Endothelial cell of umbilical vein (primary cell): ENCODE measurements at regions of chr2 and their contacts with region 1.

Region 1: DNA sequence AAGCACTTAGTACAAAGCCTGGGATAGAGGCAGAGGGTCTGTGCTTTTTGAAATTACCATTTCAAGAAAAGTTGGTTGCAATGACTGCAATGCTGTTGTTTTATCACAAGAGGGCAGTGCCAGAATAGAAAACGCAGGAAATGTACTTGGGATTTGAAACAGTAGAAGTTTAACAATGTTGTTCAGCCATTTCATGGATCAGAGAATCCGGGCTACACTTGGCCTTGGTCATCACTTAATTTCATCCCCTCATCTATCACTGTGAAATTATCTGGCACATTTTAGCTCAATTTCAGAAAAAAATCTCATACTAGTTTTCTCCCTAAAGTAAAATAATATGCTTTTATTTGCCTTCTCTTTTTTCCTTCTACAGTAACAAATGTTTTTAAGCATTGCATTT is 70.8 kb downstream of the RAPGEF4 start:
- DNase-seq: peak; percentile 54
- H3K4me3 ChIP-seq: no peak overlapping the region
- H3K27ac ChIP-seq: no peak overlapping the region
- H3K4me1 ChIP-seq: no peaks in the 10 kb centered on the region
- H3K27me3 ChIP-seq: no peaks in the 10 kb centered on the region
- CTCF ChIP-seq: peak; percentile 65 to 79
- POLR2A ChIP-seq: no peak

Region 2: DNA sequence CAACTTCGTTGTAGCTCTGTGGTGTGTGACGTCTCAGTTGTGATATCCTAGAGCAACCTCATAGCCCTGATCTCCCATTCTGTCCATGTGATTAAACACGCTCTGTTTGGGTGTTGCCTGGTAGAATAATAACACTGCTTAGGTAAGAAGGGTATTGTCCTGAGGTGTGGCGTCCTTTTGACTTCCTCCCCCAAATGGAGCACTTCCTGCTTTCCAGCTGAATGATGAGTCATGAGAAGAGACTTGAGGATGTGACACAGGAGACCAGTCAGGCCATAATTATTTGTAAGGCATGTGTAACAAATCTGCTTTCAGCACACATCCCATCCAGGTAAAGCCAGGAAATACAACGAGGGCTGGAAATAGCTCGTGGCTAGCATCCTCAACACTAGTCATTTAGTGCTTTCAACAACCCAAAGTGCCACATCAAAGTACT is 29.9 kb after region 1 on chr2:
- CTCF ChIA-PET with region 1: no interaction called
- POLR2A ChIA-PET with region 1: no interaction called
- dilution Hi-C with region 1: no loop called
- intact Hi-C with region 1: no loop called
- DNase-seq: peak; percentile 88
- H3K4me3 ChIP-seq: no peak overlapping the region
- H3K27ac ChIP-seq: peak overlapping the region; percentile 67
- H3K4me1 ChIP-seq: peaks cover 28% of the 10 kb centered on the region
- H3K27me3 ChIP-seq: no peaks in the 10 kb centered on the region
- CTCF ChIP-seq: no peak
- POLR2A ChIP-seq: no peak

Region 3: DNA sequence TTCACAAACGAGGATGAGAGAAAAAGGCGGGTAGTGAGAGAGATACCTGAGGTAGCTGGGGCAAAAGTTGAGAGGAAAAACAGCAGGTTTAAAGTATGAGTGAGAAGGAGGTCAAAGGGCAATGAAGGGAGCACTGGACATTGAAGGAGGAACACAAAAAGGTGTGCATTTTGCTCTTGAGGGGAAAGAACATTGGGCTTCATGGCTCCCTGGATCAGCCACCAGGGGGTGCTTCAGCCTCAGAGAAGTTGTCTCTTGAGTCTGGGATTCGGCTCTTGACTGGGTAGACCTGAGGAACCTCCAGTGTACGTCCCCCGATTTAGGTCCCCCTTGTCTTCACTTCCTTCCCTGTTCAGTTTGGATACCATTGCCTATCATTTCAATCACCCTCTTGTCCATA is 57.7 kb after region 1 on chr2:
- CTCF ChIA-PET with region 1: interaction called, 3 read pairs
- POLR2A ChIA-PET with region 1: no interaction called
- dilution Hi-C with region 1: no loop called
- intact Hi-C with region 1: loop called (anchors 1 kb)
- DNase-seq: peak; percentile 29
- H3K4me3 ChIP-seq: no peak overlapping the region
- H3K27ac ChIP-seq: no peak overlapping the region
- H3K4me1 ChIP-seq: peaks cover 20% of the 10 kb centered on the region
- H3K27me3 ChIP-seq: no peaks in the 10 kb centered on the region
- CTCF ChIP-seq: peak; percentile 66 to 68
- POLR2A ChIP-seq: no peak

Region 4: GRCh38 chr2:173021939-173022371 is 215.5 kb after region 1 on chr2:
- CTCF ChIA-PET with region 1: interaction called, 17 read pairs
- POLR2A ChIA-PET with region 1: no interaction called
- dilution Hi-C with region 1: no loop called
- intact Hi-C with region 1: loop called (anchors 1 kb)
- DNase-seq: peak; percentile 18
- H3K4me3 ChIP-seq: no peak overlapping the region
- H3K27ac ChIP-seq: no peak overlapping the region
- H3K4me1 ChIP-seq: no peaks in the 10 kb centered on the region
- H3K27me3 ChIP-seq: peaks cover 0 to 2% of the 10 kb centered on the region in 2 experiments
- CTCF ChIP-seq: peak; percentile 8 to 23
- POLR2A ChIP-seq: no peak

Region 5: DNA sequence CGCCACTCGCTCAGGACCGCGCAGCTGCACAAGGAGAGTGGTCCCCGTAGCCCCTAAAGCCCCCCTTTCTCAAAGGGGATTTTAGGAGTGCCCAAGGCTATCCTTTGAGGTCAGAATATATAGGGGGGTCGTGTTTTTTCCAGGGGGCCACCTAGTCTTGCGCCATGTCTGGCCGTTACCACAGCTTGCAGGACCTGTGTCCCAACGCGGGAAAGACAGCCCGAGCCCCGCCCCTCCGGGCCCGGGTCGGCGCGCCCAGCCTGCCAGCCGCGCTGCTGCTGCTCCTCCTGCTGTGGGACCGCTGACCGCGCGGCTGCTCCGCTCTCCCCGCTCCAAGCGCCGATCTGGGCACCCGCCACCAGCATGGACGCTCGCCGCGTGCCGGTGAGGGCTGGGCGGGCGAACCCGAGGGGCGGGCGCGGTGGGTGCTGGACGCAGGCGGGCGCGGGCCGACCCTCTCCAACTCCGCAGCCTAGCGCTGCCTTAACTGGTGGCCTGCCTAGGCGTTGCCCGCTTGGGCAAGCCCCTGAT is 548.2 kb after region 1 on chr2 and contains the start of gene CDCA7:
- CTCF ChIA-PET with region 1: no interaction called
- POLR2A ChIA-PET with region 1: no interaction called
- dilution Hi-C with region 1: no loop called
- intact Hi-C with region 1: loop called (anchors 1 kb)
- DNase-seq: peak; percentile 80
- H3K4me3 ChIP-seq: peak within 1 kb of the TSS; percentile 52 to 90 (median 80)
- H3K27ac ChIP-seq: peak within 1 kb of the TSS; percentile 92
- H3K4me1 ChIP-seq: peaks cover 8% of the 10 kb centered on the region
- H3K27me3 ChIP-seq: peaks cover 0 to 3% of the 10 kb centered on the region in 2 experiments
- CTCF ChIP-seq: peak in 1 of 2 donors; percentile 5
- POLR2A ChIP-seq: no peak
- total RNA-seq, gene CDCA7: 27.7 and 29.7 TPM in 2 replicates

Region 6: GRCh38 chr2:173415431-173416381 is 609.2 kb after region 1 on chr2:
- CTCF ChIA-PET with region 1: no interaction called
- POLR2A ChIA-PET with region 1: no interaction called
- dilution Hi-C with region 1: no loop called
- intact Hi-C with region 1: no loop called
- DNase-seq: no peak
- H3K4me3 ChIP-seq: no peak overlapping the region
- H3K27ac ChIP-seq: no peak overlapping the region
- H3K4me1 ChIP-seq: no peaks in the 10 kb centered on the region
- H3K27me3 ChIP-seq: peaks cover 0 to 2% of the 10 kb centered on the region in 2 experiments
- CTCF ChIP-seq: no peak
- POLR2A ChIP-seq: no peak

Region 7: GRCh38 chr2:173448938-173449471 is 642.5 kb after region 1 on chr2:
- CTCF ChIA-PET with region 1: no interaction called
- POLR2A ChIA-PET with region 1: no interaction called
- dilution Hi-C with region 1: no loop called
- intact Hi-C with region 1: loop called (anchors 1 kb)
- DNase-seq: peak; percentile 64
- H3K4me3 ChIP-seq: peak overlapping the region; percentile 29 to 45 (median 37)
- H3K27ac ChIP-seq: no peak overlapping the region
- H3K4me1 ChIP-seq: peaks cover 3% of the 10 kb centered on the region
- H3K27me3 ChIP-seq: peaks cover 3 to 9% of the 10 kb centered on the region in 2 experiments
- CTCF ChIP-seq: peak; percentile 63 to 65
- POLR2A ChIP-seq: peak; percentile 21